ENCODE measurements at regions of chr1 and their contacts with region 1.

Region 1: DNA sequence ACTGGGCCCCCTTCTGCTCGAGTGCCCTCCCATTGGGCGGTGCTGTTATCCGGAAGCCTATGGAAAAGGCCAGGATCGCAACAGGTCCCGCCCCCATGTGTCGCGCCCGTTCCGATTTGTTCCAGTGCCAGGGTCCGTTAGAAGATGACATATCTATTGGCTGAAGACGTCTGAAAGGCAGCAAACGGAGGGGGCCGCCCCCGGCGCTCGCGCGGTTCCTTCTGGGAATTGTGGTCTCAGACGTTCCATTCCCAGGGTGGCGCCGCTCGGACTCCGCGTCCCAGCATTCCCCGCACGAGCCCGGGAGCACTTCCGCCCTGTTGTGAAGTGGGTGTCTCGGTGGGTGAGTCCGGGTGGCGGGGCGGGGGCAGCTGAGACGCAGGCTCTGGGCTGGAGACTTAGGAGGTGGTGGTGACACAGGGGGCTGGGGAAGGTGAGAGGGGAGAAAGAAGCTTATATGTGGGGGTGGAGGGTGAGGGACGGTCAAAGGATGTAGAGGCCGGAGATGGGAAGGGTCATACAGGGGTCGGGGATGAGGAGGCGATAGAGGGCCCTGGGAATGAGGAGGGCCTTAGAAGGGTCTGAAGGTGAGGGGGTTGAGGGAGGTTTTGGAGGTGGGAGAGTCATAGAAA is at the start of gene ZSCAN20:
- DNase-seq: peak; percentile 76
- ATAC-seq: peak; percentile 97
- H3K4me3 Mint-ChIP-seq: peak within 1 kb of the TSS; percentile 83
- H3K27ac Mint-ChIP-seq: peak within 1 kb of the TSS; percentile 27
- H3K4me1 Mint-ChIP-seq: peaks cover 24% of the 10 kb centered on the region
- H3K27me3 Mint-ChIP-seq: no peaks in the 10 kb centered on the region
- CTCF ChIP-seq: no peak
- total RNA-seq, gene ZSCAN20: 3.6 and 3.7 TPM in 2 replicates

Region 2: GRCh38 chr1:33094971-33095604 is 377.4 kb before region 1 on chr1:
- CTCF ChIA-PET with region 1: no interaction called
- POLR2A ChIA-PET with region 1: no interaction called
- intact Hi-C with region 1: loop called (anchors 1 kb)
- DNase-seq: no peak
- ATAC-seq: no peak
- H3K4me3 Mint-ChIP-seq: no peak overlapping the region
- H3K27ac Mint-ChIP-seq: no peak overlapping the region
- H3K4me1 Mint-ChIP-seq: peaks cover 6% of the 10 kb centered on the region
- H3K27me3 Mint-ChIP-seq: peaks cover 2% of the 10 kb centered on the region
- CTCF ChIP-seq: peak; percentile 79

Region 3: DNA sequence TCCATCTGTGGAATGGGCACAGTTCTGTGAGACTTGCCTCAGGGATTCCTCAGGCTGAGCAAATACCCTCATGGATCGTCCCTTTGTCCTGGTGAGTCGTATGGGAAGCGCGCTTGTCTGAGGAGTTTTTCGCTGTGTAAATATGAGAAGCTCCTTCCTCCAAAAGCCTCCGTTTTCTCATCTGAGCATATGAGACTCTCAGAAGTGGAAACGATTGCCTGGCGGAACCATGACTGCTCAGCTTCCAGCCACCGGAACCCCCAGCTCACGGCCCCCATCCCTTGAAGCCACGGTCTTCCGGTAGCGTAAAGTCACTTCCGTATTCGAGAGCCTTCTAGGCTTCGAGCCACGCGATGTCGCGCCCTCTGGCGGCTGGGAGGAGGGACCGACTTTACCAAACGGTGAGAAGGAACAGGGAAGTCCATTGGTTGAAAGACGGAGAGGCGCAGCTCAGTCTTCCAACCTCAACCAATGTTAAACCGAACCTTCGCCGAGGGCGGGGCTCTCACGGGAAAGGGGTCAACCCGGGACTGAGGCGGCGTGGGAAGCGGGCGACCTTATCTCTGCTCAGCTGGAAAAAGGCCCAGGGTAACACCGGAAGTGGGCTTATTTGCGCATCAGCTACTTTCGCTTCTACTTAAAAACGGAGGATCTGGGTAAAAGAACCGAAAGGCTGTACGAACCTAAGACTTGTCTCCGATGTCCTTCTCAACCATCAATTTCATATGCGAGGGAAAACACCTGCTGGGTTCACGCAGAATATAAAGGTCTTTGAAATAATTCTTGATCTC is 345.3 kb before region 1 on chr1:
- CTCF ChIA-PET with region 1: no interaction called
- POLR2A ChIA-PET with region 1: interaction called, 4 read pairs
- intact Hi-C with region 1: loop called (anchors 1 kb)
- DNase-seq: peak; percentile 93
- ATAC-seq: peak; percentile 98
- H3K4me3 Mint-ChIP-seq: peak overlapping the region; percentile 93
- H3K27ac Mint-ChIP-seq: peak overlapping the region; percentile 92
- H3K4me1 Mint-ChIP-seq: peaks cover 25% of the 10 kb centered on the region
- H3K27me3 Mint-ChIP-seq: no peaks in the 10 kb centered on the region
- CTCF ChIP-seq: no peak

Region 4: DNA sequence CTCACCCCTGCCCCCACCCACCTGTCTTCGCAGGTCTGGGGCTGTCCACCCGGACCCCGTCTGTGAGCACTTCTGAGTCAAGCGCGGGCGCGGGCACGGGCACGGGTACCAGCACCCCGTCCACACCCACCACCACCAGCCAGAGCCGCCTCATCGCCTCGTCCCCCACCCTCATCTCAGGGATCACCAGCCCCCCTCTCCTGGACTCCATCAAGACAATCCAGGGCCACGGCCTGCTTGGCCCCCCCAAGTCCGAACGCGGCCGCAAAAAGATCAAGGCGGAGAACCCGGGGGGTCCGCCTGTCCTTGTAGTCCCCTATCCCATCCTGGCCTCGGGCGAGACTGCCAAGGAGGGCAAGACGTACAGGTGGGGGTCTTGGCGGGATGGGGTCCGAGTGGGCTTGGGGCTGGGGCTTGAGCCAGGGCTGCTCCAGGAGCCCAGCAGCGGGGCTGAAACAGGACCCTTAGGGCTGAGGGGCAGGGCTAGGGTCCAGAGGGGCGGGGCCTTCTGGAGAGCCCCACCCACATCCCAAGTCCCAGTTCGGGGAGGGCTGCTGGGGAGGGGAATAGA is 192.3 kb before region 1 on chr1:
- CTCF ChIA-PET with region 1: no interaction called
- POLR2A ChIA-PET with region 1: no interaction called
- intact Hi-C with region 1: no loop called
- DNase-seq: no peak
- ATAC-seq: no peak
- H3K4me3 Mint-ChIP-seq: no peak overlapping the region
- H3K27ac Mint-ChIP-seq: no peak overlapping the region
- H3K4me1 Mint-ChIP-seq: no peaks in the 10 kb centered on the region
- H3K27me3 Mint-ChIP-seq: no peaks in the 10 kb centered on the region
- CTCF ChIP-seq: no peak

Region 5: GRCh38 chr1:33295450-33296081 is 176.9 kb before region 1 on chr1:
- CTCF ChIA-PET with region 1: interaction called, 143 read pairs
- POLR2A ChIA-PET with region 1: interaction called, 6 read pairs
- intact Hi-C with region 1: loop called (anchors 1 kb)
- DNase-seq: peak; percentile 76
- ATAC-seq: peak; percentile 89
- H3K4me3 Mint-ChIP-seq: no peak overlapping the region
- H3K27ac Mint-ChIP-seq: no peak overlapping the region
- H3K4me1 Mint-ChIP-seq: no peaks in the 10 kb centered on the region
- H3K27me3 Mint-ChIP-seq: no peaks in the 10 kb centered on the region
- CTCF ChIP-seq: peak; percentile 69

Region 6: DNA sequence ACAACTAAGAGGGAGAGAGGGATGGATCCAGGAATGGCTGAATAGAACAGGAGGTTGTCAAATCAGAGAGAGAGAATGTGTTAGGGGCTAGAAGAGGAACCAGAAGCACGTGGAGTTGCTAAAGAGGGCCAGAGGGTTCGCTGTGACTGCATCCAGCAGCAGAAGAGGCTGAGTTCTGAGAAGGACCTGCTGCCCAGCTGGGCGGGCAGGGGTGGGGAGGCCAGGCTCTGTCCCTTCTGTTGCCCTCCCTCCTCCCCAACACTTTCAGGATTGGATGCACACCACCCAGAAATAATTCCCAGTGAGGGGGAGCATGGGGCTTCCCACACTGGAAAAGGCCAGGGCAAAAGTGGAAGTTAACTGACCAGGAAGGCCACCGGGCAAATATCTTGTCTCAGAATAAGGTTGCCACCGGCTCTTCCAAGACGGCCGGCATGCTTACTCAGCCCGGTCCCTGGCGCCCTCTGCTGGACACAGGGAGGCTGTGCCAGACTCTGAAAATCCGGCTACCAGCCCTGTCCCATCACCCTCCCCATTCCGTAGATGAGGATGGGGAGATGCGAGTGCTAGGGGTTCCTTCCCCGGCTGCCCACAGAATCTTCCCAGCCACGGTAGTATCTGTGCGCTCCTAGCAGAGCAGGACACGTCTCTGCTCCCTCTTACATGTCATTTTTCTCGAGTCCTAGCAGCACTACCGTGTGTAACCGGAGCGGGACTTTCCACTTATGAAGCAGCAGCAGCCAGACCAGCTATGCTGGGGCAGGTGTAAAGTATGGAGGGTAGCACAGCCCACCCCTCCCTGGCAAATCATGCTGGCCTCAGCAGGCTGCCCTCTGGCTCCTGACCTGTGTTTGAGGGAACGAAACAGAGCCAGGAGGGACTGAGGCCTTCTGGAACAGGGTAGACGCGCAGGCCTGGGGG is 104.7 kb before region 1 on chr1:
- CTCF ChIA-PET with region 1: interaction called, 8 read pairs
- POLR2A ChIA-PET with region 1: no interaction called
- intact Hi-C with region 1: loop called (anchors 1 kb)
- DNase-seq: peak; percentile 74
- ATAC-seq: peak; percentile 99
- H3K4me3 Mint-ChIP-seq: no peak overlapping the region
- H3K27ac Mint-ChIP-seq: no peak overlapping the region
- H3K4me1 Mint-ChIP-seq: no peaks in the 10 kb centered on the region
- H3K27me3 Mint-ChIP-seq: peaks cover 8% of the 10 kb centered on the region
- CTCF ChIP-seq: peak; percentile 48

Region 7: GRCh38 chr1:33446590-33446989 is 25.9 kb before region 1 on chr1:
- CTCF ChIA-PET with region 1: no interaction called
- POLR2A ChIA-PET with region 1: no interaction called
- intact Hi-C with region 1: no loop called
- DNase-seq: no peak
- ATAC-seq: no peak
- H3K4me3 Mint-ChIP-seq: no peak overlapping the region
- H3K27ac Mint-ChIP-seq: no peak overlapping the region
- H3K4me1 Mint-ChIP-seq: no peaks in the 10 kb centered on the region
- H3K27me3 Mint-ChIP-seq: peaks cover 33% of the 10 kb centered on the region
- CTCF ChIP-seq: no peak

Region 8: DNA sequence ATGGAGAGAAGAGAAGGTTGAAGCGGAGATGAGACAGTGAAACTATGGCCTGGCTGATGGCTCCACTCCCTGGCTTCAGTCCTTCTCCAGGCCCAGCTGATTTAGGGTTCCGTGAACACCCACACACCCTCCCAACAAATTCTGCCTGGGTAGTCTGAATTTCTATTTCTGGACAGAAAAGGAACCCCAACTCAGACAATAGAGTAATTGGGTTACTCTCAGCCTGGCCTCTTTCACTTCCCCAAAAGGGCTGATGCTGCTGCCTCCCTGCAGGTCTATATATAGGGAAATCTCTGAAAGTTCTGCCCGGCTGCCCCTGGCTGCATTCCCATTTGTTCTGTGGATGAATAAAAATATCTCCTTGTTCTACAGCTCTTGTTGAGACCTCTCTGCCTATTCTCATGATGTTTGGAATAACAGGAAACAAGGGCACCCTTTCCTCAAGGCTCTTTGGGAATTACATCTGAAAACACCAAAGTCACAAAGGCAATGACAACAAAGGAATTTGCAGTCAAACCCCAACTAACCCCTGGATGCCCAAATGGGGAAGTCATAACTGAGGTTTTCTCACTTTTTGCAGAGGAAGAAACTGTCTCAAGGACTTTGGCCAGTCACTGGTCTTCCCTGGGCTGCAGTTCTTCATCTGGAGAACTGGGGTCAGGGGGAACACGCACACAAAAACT is 11.4 kb before region 1 on chr1:
- CTCF ChIA-PET with region 1: interaction called, 10 read pairs
- POLR2A ChIA-PET with region 1: no interaction called
- intact Hi-C with region 1: no loop called
- DNase-seq: no peak
- ATAC-seq: peak; percentile 92
- H3K4me3 Mint-ChIP-seq: peak overlapping the region; percentile 76
- H3K27ac Mint-ChIP-seq: peak overlapping the region; percentile 75
- H3K4me1 Mint-ChIP-seq: peaks cover 49% of the 10 kb centered on the region
- H3K27me3 Mint-ChIP-seq: no peaks in the 10 kb centered on the region
- CTCF ChIP-seq: no peak